ENCODE measurements at regions of chr7 and their contacts with region 1.

Region 1: DNA sequence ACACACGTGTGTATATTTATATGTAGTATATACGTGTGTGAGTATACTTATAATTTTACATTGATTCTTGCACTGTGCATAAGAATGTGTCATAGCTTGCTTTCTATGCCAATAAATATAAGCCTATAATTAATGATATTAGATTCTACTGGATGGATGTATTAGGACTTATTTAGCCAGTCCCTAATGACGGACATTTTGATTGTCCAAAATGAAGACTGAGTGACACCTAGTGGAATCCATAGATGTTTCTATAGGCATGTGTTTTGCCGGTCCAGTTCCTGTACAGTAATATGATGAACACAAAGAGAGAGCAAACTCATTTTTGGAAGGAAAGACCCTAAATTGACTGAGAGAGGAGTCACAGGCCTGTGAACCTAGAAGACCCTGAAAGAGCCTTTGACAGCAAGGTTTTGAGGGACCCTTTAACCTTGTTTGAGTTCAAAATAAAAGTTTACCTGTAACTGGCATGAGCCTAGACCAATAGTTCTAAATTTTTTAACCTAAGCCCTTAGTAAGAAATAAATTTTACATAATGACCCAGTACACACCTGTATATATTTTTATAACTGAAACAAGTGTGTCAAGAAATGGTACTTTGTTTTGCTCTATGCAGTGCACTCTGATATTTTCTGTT is 42.4 kb upstream of the AGBL3 start:
- DNase-seq: no peak
- H3K4me3 ChIP-seq: no peak overlapping the region
- H3K27ac ChIP-seq: no peak overlapping the region
- H3K4me1 ChIP-seq: no peaks in the 10 kb centered on the region
- H3K27me3 ChIP-seq: no peaks in the 10 kb centered on the region
- CTCF ChIP-seq: peak in 6 of 11 experiments; percentile 30 to 44 (median 37)
- POLR2A ChIP-seq: no peak

Region 2: GRCh38 chr7:134632937-134633540 is 310.8 kb before region 1 on chr7:
- intact Hi-C with region 1: loop called (anchors 10 kb)
- DNase-seq: no peak
- H3K4me3 ChIP-seq: no peak overlapping the region
- H3K27ac ChIP-seq: no peak overlapping the region
- H3K4me1 ChIP-seq: peaks cover 0 to 29% (median 11%) of the 10 kb centered on the region in 6 donors
- H3K27me3 ChIP-seq: peaks cover 0 to 6% (median 0%) of the 10 kb centered on the region in 7 donors
- CTCF ChIP-seq: peak; percentile 44 to 72 (median 61)
- POLR2A ChIP-seq: no peak

Region 3: GRCh38 chr7:134686786-134687185 is 257.1 kb before region 1 on chr7:
- intact Hi-C with region 1: loop called (anchors 5 kb)
- DNase-seq: no peak
- H3K4me3 ChIP-seq: no peak overlapping the region
- H3K27ac ChIP-seq: no peak overlapping the region
- H3K4me1 ChIP-seq: peaks cover 0 to 15% (median 0%) of the 10 kb centered on the region in 6 donors
- H3K27me3 ChIP-seq: peaks cover 0 to 9% (median 0%) of the 10 kb centered on the region in 7 donors
- CTCF ChIP-seq: peak in 3 of 11 experiments; percentile 8 to 24 (median 21)
- POLR2A ChIP-seq: no peak

Region 4: DNA sequence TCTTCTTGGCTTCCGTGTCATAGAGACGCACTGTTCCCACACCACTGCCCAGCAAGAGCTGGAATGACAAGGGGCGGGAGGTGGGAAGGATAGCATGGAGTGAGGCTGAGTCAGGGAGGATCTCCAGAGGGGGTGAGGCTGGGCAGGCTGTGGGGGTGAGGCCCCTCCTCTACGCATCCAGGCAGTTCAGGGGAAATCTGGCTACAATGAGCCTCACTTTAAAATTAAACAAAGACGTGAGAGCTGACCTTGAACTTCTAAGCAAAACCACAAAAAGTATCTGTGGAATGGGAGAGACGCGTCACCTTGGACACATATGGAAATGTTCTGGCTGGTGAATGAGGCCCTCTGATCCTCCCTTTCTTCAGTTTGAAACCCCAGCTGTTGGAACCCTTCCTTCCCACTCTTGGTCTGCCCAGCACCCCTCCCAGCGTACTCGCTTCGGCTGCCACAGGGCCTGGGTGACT is 249.8 kb after region 1 on chr7:
- intact Hi-C with region 1: no loop called
- DNase-seq: no peak
- H3K4me3 ChIP-seq: no peak overlapping the region
- H3K27ac ChIP-seq: no peak overlapping the region
- H3K4me1 ChIP-seq: no peaks in the 10 kb centered on the region
- H3K27me3 ChIP-seq: no peaks in the 10 kb centered on the region
- CTCF ChIP-seq: no peak
- POLR2A ChIP-seq: no peak

Region 5: GRCh38 chr7:135562743-135563142 is 618.9 kb after region 1 on chr7:
- intact Hi-C with region 1: no loop called
- DNase-seq: no peak
- H3K4me3 ChIP-seq: no peak overlapping the region
- H3K27ac ChIP-seq: no peak overlapping the region
- H3K4me1 ChIP-seq: peaks cover 13 to 39% (median 29%) of the 10 kb centered on the region in 6 donors
- H3K27me3 ChIP-seq: no peaks in the 10 kb centered on the region
- CTCF ChIP-seq: no peak
- POLR2A ChIP-seq: no peak

Measured in spleen (tissue), 13 donors.